ENCODE measurements at regions of chr1 and their contacts with region 1.

Region 1: GRCh38 chr1:111769517-111770146 is 13.9 kb downstream of the DDX20 start:
- DNase-seq: peak; percentile 78
- ATAC-seq: peak; percentile 74
- H3K4me3 ChIP-seq: no peak overlapping the region
- H3K27ac ChIP-seq: no peak overlapping the region
- H3K4me1 ChIP-seq: no peaks in the 10 kb centered on the region; the same call in 1 of the 2 replicates
- H3K27me3 ChIP-seq: no peaks in the 10 kb centered on the region
- CTCF ChIP-seq: peak; percentile 90
- POLR2A ChIP-seq: no peak
- RAD21 ChIP-seq: peak; percentile 94

Region 2: DNA sequence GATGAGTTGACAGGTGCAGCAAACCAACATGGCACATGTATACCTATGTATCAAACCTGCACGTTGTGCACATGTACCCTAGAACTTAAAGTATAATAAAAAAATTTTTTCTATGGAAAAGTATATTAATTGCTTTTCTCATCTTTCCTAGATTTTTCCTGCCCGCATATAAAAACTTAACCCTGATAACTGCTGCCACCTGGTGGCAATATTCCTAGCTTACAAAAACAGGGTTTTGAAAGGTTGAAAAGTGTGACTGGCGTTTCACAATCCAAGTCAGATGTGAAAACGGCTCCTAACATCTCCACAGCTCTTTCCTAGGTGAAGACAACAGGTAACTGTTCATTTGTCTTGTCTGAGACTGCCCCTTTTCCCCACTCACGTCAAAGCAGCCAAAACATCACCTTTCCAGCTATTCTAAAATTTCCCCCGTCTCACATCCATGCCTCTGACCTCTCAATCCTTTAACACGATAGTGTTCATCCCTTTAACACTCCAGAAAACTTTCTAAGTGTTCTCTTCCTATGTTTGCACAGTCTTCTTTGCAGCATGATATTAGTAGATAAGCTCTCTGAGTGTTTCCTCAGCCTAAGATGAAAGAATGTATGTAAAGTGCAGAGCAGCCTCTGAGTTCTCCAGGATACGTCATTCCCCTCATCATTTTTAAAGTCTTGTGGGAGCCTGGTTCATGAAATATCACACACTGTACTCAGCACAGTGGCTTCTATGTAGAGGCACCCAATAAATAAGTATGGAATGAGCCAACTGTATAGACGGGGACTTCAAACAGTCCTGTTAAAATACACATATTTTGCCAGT is 369.6 kb before region 1 on chr1:
- CTCF ChIA-PET with region 1: no interaction called
- POLR2A ChIA-PET with region 1: interaction called, 3 read pairs
- dilution Hi-C with region 1: no loop called
- in situ Hi-C with region 1: no loop called
- intact Hi-C with region 1: loop called (anchors 5 kb)
- DNase-seq: peak; percentile 55
- ATAC-seq: peak; percentile 63
- H3K4me3 ChIP-seq: no peak overlapping the region
- H3K27ac ChIP-seq: no peak overlapping the region
- H3K4me1 ChIP-seq: no peaks in the 10 kb centered on the region
- H3K27me3 ChIP-seq: peaks cover 24% of the 10 kb centered on the region
- CTCF ChIP-seq: peak; percentile 70
- POLR2A ChIP-seq: no peak
- RAD21 ChIP-seq: peak; percentile 72

Region 3: GRCh38 chr1:111441573-111442192 is 327.9 kb before region 1 on chr1:
- CTCF ChIA-PET with region 1: no interaction called
- POLR2A ChIA-PET with region 1: no interaction called
- dilution Hi-C with region 1: no loop called
- in situ Hi-C with region 1: no loop called
- intact Hi-C with region 1: no loop called
- DNase-seq: peak; percentile 25
- ATAC-seq: peak; percentile 48
- H3K4me3 ChIP-seq: no peak overlapping the region
- H3K27ac ChIP-seq: no peak overlapping the region
- H3K4me1 ChIP-seq: peaks cover 2% of the 10 kb centered on the region
- H3K27me3 ChIP-seq: no peaks in the 10 kb centered on the region
- CTCF ChIP-seq: peak; percentile 50
- POLR2A ChIP-seq: no peak
- RAD21 ChIP-seq: peak; percentile 24; the same call in 1 of the 2 replicates

Region 4: GRCh38 chr1:111481387-111482221 is 288.0 kb before region 1 on chr1:
- CTCF ChIA-PET with region 1: interaction called, 4 read pairs
- POLR2A ChIA-PET with region 1: no interaction called
- dilution Hi-C with region 1: no loop called
- in situ Hi-C with region 1: loop called (anchors 5 kb)
- intact Hi-C with region 1: loop called (anchors 1 kb)
- DNase-seq: peak; percentile 66
- ATAC-seq: peak; percentile 99
- H3K4me3 ChIP-seq: no peak overlapping the region
- H3K27ac ChIP-seq: no peak overlapping the region
- H3K4me1 ChIP-seq: no peaks in the 10 kb centered on the region
- H3K27me3 ChIP-seq: no peaks in the 10 kb centered on the region
- CTCF ChIP-seq: peak; percentile 92
- POLR2A ChIP-seq: peak; percentile 28; the same call in 1 of the 2 replicates
- RAD21 ChIP-seq: peak; percentile 95

Region 5: GRCh38 chr1:111603979-111604378 is 165.7 kb before region 1 on chr1:
- CTCF ChIA-PET with region 1: no interaction called
- POLR2A ChIA-PET with region 1: no interaction called
- dilution Hi-C with region 1: no loop called
- in situ Hi-C with region 1: no loop called
- intact Hi-C with region 1: no loop called
- DNase-seq: no peak
- ATAC-seq: no peak
- H3K4me3 ChIP-seq: no peak overlapping the region
- H3K27ac ChIP-seq: no peak overlapping the region
- H3K4me1 ChIP-seq: peaks cover 13% of the 10 kb centered on the region
- H3K27me3 ChIP-seq: no peaks in the 10 kb centered on the region
- CTCF ChIP-seq: no peak
- POLR2A ChIP-seq: no peak
- RAD21 ChIP-seq: no peak

Region 6: DNA sequence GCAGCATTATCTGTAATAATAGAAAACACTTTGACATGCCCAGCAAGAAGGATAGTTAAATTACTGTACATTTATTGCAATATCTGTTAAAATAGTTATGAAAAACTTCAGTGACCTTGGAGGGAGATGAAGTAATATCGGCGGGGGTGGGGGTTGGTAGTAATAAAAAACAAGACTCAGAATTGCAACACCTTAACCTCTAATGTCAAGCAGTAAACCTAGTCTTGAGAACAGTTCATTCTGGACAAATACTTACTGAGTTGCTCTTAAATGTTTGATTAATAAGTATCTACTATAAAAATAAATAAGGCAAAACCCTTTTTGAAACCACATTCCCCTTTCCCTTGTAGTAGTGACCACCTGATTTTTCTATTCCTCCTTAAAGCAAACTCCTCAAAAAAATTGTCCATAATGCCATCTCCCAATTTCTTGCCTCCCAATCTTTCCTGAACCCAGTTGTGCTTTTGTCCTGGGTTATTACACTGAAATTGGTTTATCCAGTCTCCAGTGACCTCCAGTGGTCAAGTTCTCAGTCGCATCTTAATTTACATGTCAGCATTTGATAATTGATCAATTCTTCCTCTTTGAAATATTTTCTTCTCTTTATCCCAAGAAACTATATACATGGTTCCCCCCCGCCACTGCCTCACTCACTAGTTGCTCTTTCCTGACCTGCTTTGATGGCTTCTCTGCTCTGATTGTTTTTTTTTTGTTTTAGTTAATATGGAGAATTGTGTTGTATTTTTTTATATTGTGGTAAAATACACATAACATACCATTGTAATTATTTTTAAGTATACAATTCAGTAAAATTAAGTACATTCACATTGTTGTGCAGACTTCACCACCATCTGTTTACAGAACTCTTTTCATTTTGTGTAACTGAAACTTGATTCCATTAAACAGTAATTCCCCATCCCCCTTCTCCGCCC is 113.3 kb before region 1 on chr1:
- CTCF ChIA-PET with region 1: no interaction called
- POLR2A ChIA-PET with region 1: no interaction called
- dilution Hi-C with region 1: no loop called
- in situ Hi-C with region 1: no loop called
- intact Hi-C with region 1: loop called (anchors 1 kb)
- DNase-seq: peak; percentile 66
- ATAC-seq: peak; percentile 72
- H3K4me3 ChIP-seq: no peak overlapping the region
- H3K27ac ChIP-seq: no peak overlapping the region
- H3K4me1 ChIP-seq: peaks cover 8% of the 10 kb centered on the region
- H3K27me3 ChIP-seq: no peaks in the 10 kb centered on the region
- CTCF ChIP-seq: peak; percentile 72
- POLR2A ChIP-seq: 0 out of 2 replicates have a peak, but pooled peaks have one; percentile 19
- RAD21 ChIP-seq: peak; percentile 86

Region 7: GRCh38 chr1:111720274-111720976 is 49.2 kb before region 1 on chr1:
- CTCF ChIA-PET with region 1: interaction called, 6 read pairs
- POLR2A ChIA-PET with region 1: interaction called, 3 read pairs
- dilution Hi-C with region 1: no loop called
- in situ Hi-C with region 1: no loop called
- intact Hi-C with region 1: loop called (anchors 1 kb)
- DNase-seq: no peak
- ATAC-seq: no peak
- H3K4me3 ChIP-seq: no peak overlapping the region
- H3K27ac ChIP-seq: no peak overlapping the region
- H3K4me1 ChIP-seq: peaks cover 12% of the 10 kb centered on the region
- H3K27me3 ChIP-seq: no peaks in the 10 kb centered on the region
- CTCF ChIP-seq: no peak
- POLR2A ChIP-seq: no peak
- RAD21 ChIP-seq: no peak

Region 8: GRCh38 chr1:112337028-112337531 is 567.4 kb after region 1 on chr1:
- CTCF ChIA-PET with region 1: no interaction called
- POLR2A ChIA-PET with region 1: no interaction called
- dilution Hi-C with region 1: no loop called
- in situ Hi-C with region 1: no loop called
- intact Hi-C with region 1: loop called (anchors 10 kb)
- DNase-seq: peak; percentile 31
- ATAC-seq: peak; percentile 87
- H3K4me3 ChIP-seq: no peak overlapping the region
- H3K27ac ChIP-seq: no peak overlapping the region
- H3K4me1 ChIP-seq: no peaks in the 10 kb centered on the region
- H3K27me3 ChIP-seq: peaks cover 32% of the 10 kb centered on the region
- CTCF ChIP-seq: peak; percentile 52
- POLR2A ChIP-seq: no peak
- RAD21 ChIP-seq: peak; percentile 61

Measured in IMR-90 (cell line).